PC-9 (cell line): ENCODE measurements at regions of chr11 and their contacts with region 1.

Region 1: GRCh38 chr11:128157423-128158298 is 429.7 kb downstream of the ETS1 start:
- DNase-seq: peak; percentile 50 to 58
- H3K4me3 ChIP-seq: peak overlapping the region; percentile 49; the same call in 1 of the 2 replicates
- H3K27ac ChIP-seq: no peak overlapping the region
- H3K4me1 ChIP-seq: no peaks in the 10 kb centered on the region
- H3K27me3 ChIP-seq: no peaks in the 10 kb centered on the region
- CTCF ChIP-seq: peak; percentile 99

Region 2: GRCh38 chr11:127843483-127844396 is 313.9 kb before region 1 on chr11:
- CTCF ChIA-PET with region 1: no interaction called
- POLR2A ChIA-PET with region 1: no interaction called
- intact Hi-C with region 1: loop called (anchors 5 kb)
- DNase-seq: peak in 1 of 2 experiments; percentile 69
- H3K4me3 ChIP-seq: no peak overlapping the region
- H3K27ac ChIP-seq: no peak overlapping the region
- H3K4me1 ChIP-seq: no peaks in the 10 kb centered on the region
- H3K27me3 ChIP-seq: peaks cover 5% of the 10 kb centered on the region; the same call in 1 of the 2 replicates
- CTCF ChIP-seq: peak; percentile 74

Region 3: GRCh38 chr11:128133501-128133900 is 24.2 kb before region 1 on chr11:
- CTCF ChIA-PET with region 1: no interaction called
- POLR2A ChIA-PET with region 1: no interaction called
- intact Hi-C with region 1: no loop called
- DNase-seq: no peak
- H3K4me3 ChIP-seq: no peak overlapping the region
- H3K27ac ChIP-seq: no peak overlapping the region
- H3K4me1 ChIP-seq: no peaks in the 10 kb centered on the region
- H3K27me3 ChIP-seq: no peaks in the 10 kb centered on the region
- CTCF ChIP-seq: no peak

Region 4: DNA sequence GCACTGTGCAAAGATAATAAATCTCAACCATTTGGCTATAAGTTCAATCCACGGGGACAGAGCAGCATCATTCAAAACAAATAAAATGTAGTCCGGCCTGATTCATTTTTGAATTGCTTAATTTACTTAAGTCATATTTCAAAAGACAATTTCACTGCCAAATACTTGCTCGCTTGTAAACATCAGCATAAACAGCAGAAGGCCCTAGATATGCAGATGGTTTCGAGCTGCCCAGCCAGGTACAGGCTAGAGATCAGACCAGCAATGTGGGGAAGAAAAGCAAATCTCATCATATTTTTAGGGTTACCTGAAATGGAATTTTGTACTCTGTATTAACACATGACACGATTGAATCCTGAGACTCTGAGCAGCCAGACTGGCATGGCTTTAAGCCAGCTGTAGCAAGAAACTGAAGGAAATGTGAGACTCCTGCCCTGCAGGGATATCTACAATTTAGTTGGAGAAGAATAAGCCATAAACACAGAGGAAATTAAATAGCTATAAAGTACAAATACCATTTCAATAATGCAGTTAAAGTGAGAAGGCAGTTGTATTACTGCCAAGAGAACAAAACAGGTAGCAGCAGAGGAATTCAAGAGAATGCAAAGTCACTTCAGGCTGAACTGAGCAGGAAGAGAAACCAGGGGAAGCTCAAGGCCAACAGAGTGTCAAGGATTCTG is 10.6 kb before region 1 on chr11:
- CTCF ChIA-PET with region 1: interaction called, 10 read pairs
- POLR2A ChIA-PET with region 1: no interaction called
- intact Hi-C with region 1: no loop called
- DNase-seq: peak; percentile 18 to 79
- H3K4me3 ChIP-seq: no peak overlapping the region
- H3K27ac ChIP-seq: peak overlapping the region; percentile 43
- H3K4me1 ChIP-seq: peaks cover 14% of the 10 kb centered on the region
- H3K27me3 ChIP-seq: no peaks in the 10 kb centered on the region
- CTCF ChIP-seq: no peak

Region 5: GRCh38 chr11:128210148-128210940 is 52.7 kb after region 1 on chr11:
- CTCF ChIA-PET with region 1: no interaction called
- POLR2A ChIA-PET with region 1: no interaction called
- intact Hi-C with region 1: no loop called
- DNase-seq: peak; percentile 77 to 100
- H3K4me3 ChIP-seq: peak overlapping the region; percentile 16; the same call in 1 of the 2 replicates
- H3K27ac ChIP-seq: peak overlapping the region; percentile 100
- H3K4me1 ChIP-seq: peaks cover 59% of the 10 kb centered on the region
- H3K27me3 ChIP-seq: no peaks in the 10 kb centered on the region
- CTCF ChIP-seq: no peak

Region 6: GRCh38 chr11:128831174-128832120 is 673.8 kb after region 1 on chr11:
- CTCF ChIA-PET with region 1: interaction called, 11 read pairs
- POLR2A ChIA-PET with region 1: no interaction called
- intact Hi-C with region 1: loop called (anchors 1 kb)
- DNase-seq: peak; percentile 49 to 66
- H3K4me3 ChIP-seq: peak overlapping the region; percentile 6; the same call in 1 of the 2 replicates
- H3K27ac ChIP-seq: no peak overlapping the region
- H3K4me1 ChIP-seq: no peaks in the 10 kb centered on the region
- H3K27me3 ChIP-seq: no peaks in the 10 kb centered on the region
- CTCF ChIP-seq: peak; percentile 95

Region 7: DNA sequence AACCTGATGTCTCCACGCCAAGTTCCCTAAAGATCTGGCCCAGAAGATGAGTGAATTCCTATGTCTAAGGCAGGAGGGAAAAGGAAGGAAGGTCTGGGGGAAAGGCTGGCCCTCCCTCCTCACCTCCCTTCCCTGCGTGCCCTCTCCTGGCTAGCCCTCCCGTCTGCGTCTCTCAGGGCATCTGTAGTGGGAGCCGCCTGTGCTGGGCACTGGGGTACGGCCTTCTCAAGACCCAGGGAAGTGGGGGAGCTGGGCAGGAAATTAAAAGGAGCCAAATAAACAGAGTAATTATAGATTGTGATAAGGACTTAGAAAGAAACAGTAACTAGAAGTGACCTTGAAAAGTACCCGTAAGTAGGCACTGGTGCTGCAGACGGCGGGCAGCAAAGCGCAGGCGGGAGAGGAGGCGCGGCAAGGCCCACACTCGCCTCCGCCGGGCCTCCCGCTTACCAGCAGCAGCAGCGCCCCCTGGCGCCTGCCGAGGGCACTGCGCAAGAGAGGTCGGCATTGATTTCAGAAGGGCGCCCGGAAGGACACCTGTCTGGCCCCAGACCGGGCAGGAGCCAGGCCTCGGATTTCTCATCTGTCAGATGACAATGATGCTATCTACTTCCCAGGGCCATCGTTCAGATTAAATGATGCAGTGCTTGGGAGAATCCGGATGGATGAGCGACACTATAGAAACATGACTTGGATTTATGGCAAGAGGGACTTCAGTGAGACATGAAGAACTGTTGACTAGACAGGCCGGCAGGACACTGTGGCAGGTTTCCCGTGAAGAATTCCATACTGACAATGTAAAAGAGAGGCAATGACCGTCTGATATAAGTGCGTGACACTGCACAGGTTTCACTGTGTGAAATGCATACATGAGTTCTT is 702.1 kb after region 1 on chr11:
- CTCF ChIA-PET with region 1: interaction called, 17 read pairs
- POLR2A ChIA-PET with region 1: no interaction called
- intact Hi-C with region 1: no loop called
- DNase-seq: peak; percentile 33 to 42
- H3K4me3 ChIP-seq: no peak overlapping the region
- H3K27ac ChIP-seq: no peak overlapping the region
- H3K4me1 ChIP-seq: no peaks in the 10 kb centered on the region
- H3K27me3 ChIP-seq: peaks cover 32% of the 10 kb centered on the region
- CTCF ChIP-seq: peak; percentile 83